Activated naive CD8-positive, alpha-beta T cell treated with anti-CD3 and anti-CD28 coated beads, Interleukin-2, amount 10 ng/mL, durations not matched to agents 7 days and 5 days (primary cell): ENCODE measurements at regions of chr22 and their contacts with region 1.

Region 1: DNA sequence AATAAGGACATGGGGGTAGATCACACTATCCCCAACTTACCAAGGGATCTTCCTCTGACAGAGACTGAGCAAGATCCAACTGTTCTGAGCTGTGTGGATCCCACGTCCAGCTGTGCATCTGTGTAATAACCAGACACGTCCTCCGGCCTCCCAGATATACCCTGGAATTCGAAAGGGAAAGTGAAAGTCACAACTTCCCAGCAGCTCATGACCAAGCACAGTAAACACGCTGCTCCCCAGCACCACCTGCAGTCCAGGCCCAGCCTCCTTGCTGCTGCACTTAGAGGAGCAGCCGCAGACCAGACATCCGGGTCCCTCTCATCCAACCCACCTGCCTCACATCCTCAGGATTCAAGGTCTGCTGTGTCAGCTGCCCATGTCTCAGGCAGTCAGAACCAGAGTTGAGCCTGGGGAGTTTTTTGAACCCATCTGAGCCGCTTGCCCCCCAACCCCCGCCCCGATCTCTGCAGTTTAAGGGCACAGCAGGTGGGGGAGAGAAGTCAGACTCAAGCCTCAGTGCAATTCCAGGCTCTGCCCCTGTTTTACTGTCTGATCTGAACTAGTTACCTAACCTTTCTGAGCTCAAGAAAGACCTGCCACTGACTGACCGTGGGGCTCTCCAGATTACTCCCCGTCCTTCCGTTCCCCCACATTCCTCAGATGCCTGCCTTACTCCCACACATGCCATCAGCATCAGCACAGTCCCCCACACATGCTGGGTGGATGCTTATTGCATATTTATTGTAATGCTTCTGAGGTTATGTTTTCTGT is at the start of gene APOL2:
- DNase-seq: peak; percentile 76
- ATAC-seq: peak; percentile 98
- H3K4me3 Mint-ChIP-seq: peak within 1 kb of the TSS; percentile 88
- H3K27ac Mint-ChIP-seq: peak within 1 kb of the TSS; percentile 88
- H3K4me1 Mint-ChIP-seq: peaks cover 35% of the 10 kb centered on the region
- H3K27me3 Mint-ChIP-seq: peaks cover 10% of the 10 kb centered on the region
- total RNA-seq, gene APOL2: 77.8 to 85.0 TPM

Region 2: GRCh38 chr22:36227386-36227785 is 12.2 kb before region 1 on chr22:
- POLR2A ChIA-PET with region 1: interaction called, 15 read pairs
- DNase-seq: no peak
- ATAC-seq: peak; percentile 64
- H3K4me3 Mint-ChIP-seq: no peak overlapping the region
- H3K27ac Mint-ChIP-seq: peak overlapping the region; percentile 47
- H3K4me1 Mint-ChIP-seq: peaks cover 12% of the 10 kb centered on the region
- H3K27me3 Mint-ChIP-seq: no peaks in the 10 kb centered on the region

Region 3: GRCh38 chr22:36252754-36253517 is 13.3 kb after region 1 on chr22 and contains the start of gene APOL1:
- POLR2A ChIA-PET with region 1: interaction called, 26 read pairs
- DNase-seq: peak; percentile 52
- ATAC-seq: peak; percentile 95
- H3K4me3 Mint-ChIP-seq: peak within 1 kb of the TSS; percentile 92
- H3K27ac Mint-ChIP-seq: peak within 1 kb of the TSS; percentile 93
- H3K4me1 Mint-ChIP-seq: peaks cover 34% of the 10 kb centered on the region
- H3K27me3 Mint-ChIP-seq: no peaks in the 10 kb centered on the region
- total RNA-seq, gene APOL1: 38.4 to 40.9 TPM